ENCODE measurements at regions of chr7 and their contacts with region 1.

Region 1: GRCh38 chr7:44581879-44582603 is at the start of gene TMED4:
- DNase-seq: peak; percentile 99 to 100
- ATAC-seq: peak; percentile 98 to 99 (median 98)
- H3K4me3 ChIP-seq: peak within 1 kb of the TSS; percentile 72 to 99 (median 89)
- H3K27ac ChIP-seq: peak within 1 kb of the TSS; percentile 86 to 99 (median 96)
- H3K4me1 ChIP-seq: peaks cover 5 to 34% (median 24%) of the 10 kb centered on the region in 9 donors
- H3K27me3 ChIP-seq: no peaks in the 10 kb centered on the region
- CTCF ChIP-seq: no peak
- total RNA-seq, gene TMED4: 55.4 to 81.4 (median 69.4) TPM

Region 2: DNA sequence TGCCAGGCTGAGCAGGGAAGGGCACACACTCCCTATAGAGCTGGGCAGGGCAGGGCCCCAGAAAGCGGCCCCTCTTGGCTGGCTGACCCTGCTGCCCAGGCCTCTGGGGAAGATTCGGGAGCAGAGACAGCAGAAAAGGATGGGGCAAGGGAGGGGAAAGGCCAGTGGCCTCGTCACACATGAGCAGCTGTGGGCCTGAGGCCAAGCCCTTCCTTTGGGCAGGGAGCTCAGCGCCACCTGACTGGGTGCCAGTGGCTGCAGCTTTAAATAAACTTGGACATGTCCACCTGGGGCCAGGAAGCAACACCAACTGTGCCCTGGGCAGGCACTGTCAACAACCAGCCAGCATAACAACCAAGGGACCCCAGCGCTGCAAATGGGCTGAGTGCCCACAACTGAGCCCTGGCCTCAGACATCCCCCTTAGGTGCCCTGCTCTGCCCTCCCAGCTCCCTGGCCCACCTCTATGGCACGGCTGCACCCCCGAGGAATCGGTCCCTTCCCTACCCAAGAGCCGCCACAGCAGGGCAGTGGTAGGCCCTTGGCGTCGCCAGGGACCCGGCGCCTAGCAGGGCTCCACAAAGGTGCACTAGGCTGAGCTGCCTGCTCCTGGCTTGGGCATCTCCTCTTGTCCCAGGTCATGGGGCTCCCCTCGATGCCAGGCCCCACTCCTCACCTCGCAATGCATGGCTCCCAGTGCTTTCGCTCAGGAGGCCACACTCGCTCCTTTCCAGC is 259.2 kb before region 1 on chr7:
- intact Hi-C with region 1: no loop called
- DNase-seq: peak; percentile 81 to 84
- ATAC-seq: peak; percentile 73 to 91 (median 82)
- H3K4me3 ChIP-seq: no peak overlapping the region
- H3K27ac ChIP-seq: peak overlapping the region; percentile 51 to 96 (median 84)
- H3K4me1 ChIP-seq: peaks cover 0 to 71% (median 19%) of the 10 kb centered on the region in 9 donors
- H3K27me3 ChIP-seq: peaks cover 0 to 36% (median 19%) of the 10 kb centered on the region in 7 donors
- CTCF ChIP-seq: peak in 1 of 9 donors; percentile 20

Region 3: DNA sequence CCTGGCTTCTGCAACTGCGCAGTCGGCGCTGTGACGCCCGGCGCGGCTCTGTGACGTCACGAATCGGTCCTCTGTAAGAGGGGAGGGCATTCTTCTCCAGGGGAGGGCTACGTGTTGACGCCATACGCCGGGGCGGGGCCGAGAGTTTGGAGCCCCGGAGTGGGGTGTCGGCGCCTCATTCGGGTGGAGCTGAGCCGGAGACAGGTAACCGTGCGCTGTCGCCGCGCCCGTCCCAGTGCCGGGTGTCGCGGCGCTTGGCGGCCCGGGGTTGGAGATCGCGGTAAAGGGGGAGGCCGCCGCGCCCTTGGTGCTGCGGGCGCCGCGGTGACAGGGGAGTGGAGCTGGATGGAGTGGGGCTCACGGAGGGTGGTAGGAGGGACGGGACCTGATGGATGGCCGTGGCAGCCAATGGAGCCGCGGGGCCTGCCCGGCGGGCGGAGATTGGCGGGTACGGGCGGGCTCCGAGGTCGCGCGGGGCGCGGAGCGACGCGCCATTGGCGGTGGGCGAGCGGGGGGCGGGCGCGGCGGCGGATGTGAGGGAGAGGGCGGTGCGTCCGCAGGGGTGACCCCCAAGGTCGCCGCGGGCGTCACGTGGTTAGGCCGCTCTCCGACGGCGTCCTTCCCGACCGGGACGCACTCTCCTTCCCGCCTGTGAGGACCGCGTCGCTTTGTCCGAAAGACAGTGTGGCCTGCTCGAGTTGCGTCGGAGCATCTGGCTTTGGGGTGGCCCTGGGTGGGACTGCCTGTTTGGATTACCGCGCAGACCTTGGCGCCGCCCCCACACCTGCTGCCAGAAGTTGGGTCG is 24.6 kb after region 1 on chr7 and contains the start of gene OGDH:
- intact Hi-C with region 1: loop called in 2 of 10 experiments (anchors 1 kb)
- DNase-seq: peak; percentile 99
- ATAC-seq: peak; percentile 96 to 99 (median 98)
- H3K4me3 ChIP-seq: peak within 1 kb of the TSS; percentile 39 to 96 (median 72)
- H3K27ac ChIP-seq: peak within 1 kb of the TSS; percentile 86 to 99 (median 98)
- H3K4me1 ChIP-seq: peaks cover 2 to 35% (median 32%) of the 10 kb centered on the region in 9 donors
- H3K27me3 ChIP-seq: no peaks in the 10 kb centered on the region
- CTCF ChIP-seq: peak in 1 of 9 donors; percentile 8
- total RNA-seq, gene OGDH: 500 to 724 (median 679) TPM

Region 4: DNA sequence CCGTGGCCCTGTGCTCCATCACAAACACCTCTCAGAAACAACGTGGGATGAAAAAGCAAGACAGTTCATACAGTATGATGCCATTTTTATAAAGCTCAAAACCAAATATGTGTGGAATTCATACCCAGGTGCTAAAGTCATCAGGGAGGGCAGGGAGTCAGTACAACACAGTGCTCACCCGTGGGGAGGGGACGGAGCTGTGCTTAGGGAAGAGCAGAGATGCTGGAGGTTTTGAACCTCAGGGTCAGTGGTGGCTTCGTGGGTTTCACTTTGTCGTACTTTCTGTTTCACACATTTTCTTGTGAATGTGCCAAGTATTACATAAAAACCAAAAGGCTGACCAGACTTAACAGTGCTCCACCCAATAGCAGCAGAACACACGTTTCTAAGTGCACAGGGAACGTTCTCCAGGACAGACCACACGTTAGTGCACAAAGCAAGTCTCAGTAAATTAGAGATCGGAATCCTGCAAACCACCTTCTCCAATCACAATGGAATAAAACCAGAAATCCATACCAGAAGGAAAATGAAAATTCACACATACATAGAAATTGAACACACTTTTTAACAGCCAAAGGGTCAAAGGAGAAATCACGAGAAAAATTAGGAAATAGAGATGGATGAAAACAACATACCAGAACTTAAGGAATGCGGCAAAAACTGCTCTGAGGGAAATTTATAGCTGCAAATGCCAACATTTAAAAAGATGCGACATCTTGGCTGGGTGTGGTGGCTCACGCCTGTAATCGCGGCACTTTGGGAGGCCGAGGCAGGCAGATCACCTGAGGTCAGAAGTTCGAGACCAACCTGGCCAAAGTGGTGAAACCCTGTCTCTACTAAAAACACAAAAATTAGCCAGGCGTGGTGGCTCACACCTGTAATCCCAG is 188.0 kb after region 1 on chr7:
- intact Hi-C with region 1: loop called in 1 of 10 experiments (anchors 10 kb)
- DNase-seq: peak; percentile 21 to 27
- ATAC-seq: peak; percentile 20 to 60 (median 48)
- H3K4me3 ChIP-seq: peak overlapping the region in 5 of 10 donors; percentile 0 to 21 (median 7)
- H3K27ac ChIP-seq: peak overlapping the region in 9 of 10 donors; percentile 38 to 85 (median 57)
- H3K4me1 ChIP-seq: peaks cover 20 to 39% (median 36%) of the 10 kb centered on the region in 9 donors
- H3K27me3 ChIP-seq: no peaks in the 10 kb centered on the region
- CTCF ChIP-seq: no peak

Region 5: DNA sequence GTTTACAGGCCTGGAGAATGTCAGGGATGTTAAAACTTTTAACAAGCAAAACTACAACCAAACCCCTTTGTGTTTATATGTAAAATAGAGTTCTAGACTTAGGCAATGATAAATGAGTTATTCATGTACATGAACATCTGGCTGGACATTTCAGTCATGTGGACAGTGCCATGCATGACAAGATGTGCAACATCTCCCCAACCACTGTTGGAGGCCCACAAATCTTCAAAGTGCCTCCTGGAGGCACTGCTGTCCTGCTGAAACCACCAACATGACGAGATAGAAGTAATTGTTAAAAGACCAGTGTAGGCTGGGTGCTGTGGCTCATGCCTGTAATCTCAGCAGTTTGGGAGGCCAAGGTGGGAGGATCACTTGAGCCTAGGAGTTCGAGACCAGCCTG is 232.9 kb after region 1 on chr7:
- intact Hi-C with region 1: no loop called
- DNase-seq: no peak
- ATAC-seq: no peak
- H3K4me3 ChIP-seq: no peak overlapping the region
- H3K27ac ChIP-seq: no peak overlapping the region
- H3K4me1 ChIP-seq: no peaks in the 10 kb centered on the region
- H3K27me3 ChIP-seq: no peaks in the 10 kb centered on the region
- CTCF ChIP-seq: no peak

Region 6: GRCh38 chr7:44986218-44987053 is 404.4 kb after region 1 on chr7:
- intact Hi-C with region 1: loop called in 1 of 10 experiments (anchors 2 kb)
- DNase-seq: peak; percentile 93 to 96
- ATAC-seq: peak; percentile 98 to 99 (median 99)
- H3K4me3 ChIP-seq: peak overlapping the region; percentile 6 to 71 (median 62)
- H3K27ac ChIP-seq: peak overlapping the region; percentile 89 to 98 (median 96)
- H3K4me1 ChIP-seq: peaks cover 0 to 56% (median 30%) of the 10 kb centered on the region in 9 donors
- H3K27me3 ChIP-seq: no peaks in the 10 kb centered on the region
- CTCF ChIP-seq: no peak

Measured in heart right ventricle (tissue), 16 donors.